Naive thymus-derived CD4-positive, alpha-beta T cell (primary cell): ENCODE measurements at regions of chr3 and their contacts with region 1.

Region 1: DNA sequence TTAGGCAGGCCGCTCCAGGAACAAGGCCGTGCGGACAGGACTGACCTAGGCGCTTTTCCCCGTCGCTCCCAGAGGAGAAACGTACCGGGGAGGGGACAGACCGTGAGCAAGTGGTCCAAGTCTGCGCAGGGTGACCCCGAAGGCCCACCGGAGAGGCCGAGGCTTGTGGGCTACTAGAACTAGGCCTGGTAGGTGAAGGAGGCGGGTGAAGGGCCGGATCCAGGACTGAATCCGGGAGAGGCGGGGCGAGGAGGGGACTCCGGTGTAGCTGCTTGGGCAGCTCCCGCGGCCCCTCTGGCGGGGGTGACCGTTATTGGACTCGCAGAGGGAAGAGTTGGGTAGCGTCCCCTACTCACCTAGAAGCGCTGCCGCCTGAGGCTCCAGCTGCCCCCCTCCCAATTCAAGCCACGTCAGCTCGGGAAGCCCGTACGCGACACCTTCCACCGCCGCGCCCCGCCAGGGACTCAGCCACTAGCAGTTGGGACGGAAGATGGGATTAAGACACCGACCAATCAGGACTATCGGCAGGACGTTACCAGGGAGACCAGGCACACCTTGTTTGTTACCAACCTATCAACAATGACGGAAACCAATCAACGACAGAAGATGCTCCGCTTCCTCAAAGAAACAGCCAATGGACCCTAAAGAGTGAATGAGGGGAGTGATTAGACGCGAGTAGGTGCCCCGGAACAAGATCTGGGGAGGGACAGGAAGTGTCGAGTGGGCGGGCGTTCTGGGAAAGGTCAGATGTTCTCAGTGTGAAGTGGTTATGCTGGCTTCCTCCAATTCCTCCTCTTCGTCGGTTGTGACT is at the start of gene GOLGB1:
- DNase-seq: peak; percentile 79 to 98 (median 96)
- ATAC-seq: peak; percentile 96
- H3K4me3 ChIP-seq: peak within 1 kb of the TSS; percentile 78
- H3K4me3 Mint-ChIP-seq: peak within 1 kb of the TSS in 3 of 10 donors; percentile 5 to 58 (median 39)
- H3K27ac ChIP-seq: peak within 1 kb of the TSS; percentile 96
- H3K27ac Mint-ChIP-seq: peak within 1 kb of the TSS in 2 of 9 donors; percentile 19 to 36
- H3K4me1 ChIP-seq: peaks cover 4 to 11% of the 10 kb centered on the region in 2 donors
- H3K4me1 Mint-ChIP-seq: peaks cover 5 to 18% (median 10%) of the 10 kb centered on the region in 7 donors
- H3K27me3 ChIP-seq: no peaks in the 10 kb centered on the region
- H3K27me3 Mint-ChIP-seq: peaks cover 0 to 24% (median 14%) of the 10 kb centered on the region in 5 donors
- total RNA-seq, gene GOLGB1: 29.5 to 49.7 (median 44.5) TPM

Region 2: DNA sequence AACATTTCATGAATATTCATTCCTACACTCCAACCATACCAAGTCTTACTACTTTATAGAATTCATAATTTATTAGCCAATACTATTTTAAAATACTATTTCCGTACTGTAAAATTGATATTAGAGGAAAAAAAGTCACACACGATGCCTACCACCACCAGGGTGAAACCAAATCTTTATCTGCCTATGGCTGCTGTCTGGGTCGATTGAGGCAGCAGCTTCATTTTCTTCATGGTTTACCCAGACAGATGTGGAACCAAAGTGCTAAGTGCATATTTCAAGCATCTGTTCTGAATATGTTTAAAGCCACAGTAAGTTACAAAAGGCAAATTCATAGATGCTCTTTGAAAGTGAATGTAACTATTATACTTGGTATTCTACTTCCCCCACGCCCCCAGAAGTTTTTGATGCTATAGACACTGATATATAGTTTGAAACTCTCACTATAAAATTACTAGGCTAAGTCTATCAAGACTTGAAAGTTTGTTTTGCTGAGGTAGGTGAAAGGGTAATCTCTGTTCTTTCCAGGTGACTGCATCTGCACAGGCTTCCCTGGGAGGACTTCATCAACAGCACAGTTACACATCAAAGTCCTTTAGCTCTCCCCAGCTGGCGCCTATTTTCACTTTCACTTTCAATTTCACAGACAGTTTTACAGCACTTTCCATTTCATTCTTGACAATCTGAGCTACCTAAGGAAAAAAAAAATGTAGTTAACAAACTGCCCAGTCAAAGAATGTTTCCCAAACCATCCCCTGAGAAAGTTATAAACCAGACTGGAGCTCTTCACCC is 317.6 kb before region 1 on chr3:
- CTCF ChIA-PET with region 1: no interaction called
- POLR2A ChIA-PET with region 1: no interaction called
- intact Hi-C with region 1: loop called (anchors 1 to 5 kb)
- DNase-seq: peak in 8 of 9 donors; percentile 36 to 80 (median 74)
- ATAC-seq: peak; percentile 89
- H3K4me3 ChIP-seq: peak overlapping the region; percentile 52
- H3K4me3 Mint-ChIP-seq: peak overlapping the region; percentile 46 to 84 (median 76)
- H3K27ac ChIP-seq: peak overlapping the region; percentile 33
- H3K27ac Mint-ChIP-seq: peak overlapping the region; percentile 48 to 92 (median 84)
- H3K4me1 ChIP-seq: peaks cover 0 to 9% of the 10 kb centered on the region in 2 donors
- H3K4me1 Mint-ChIP-seq: peaks cover 6 to 31% (median 24%) of the 10 kb centered on the region in 7 donors
- H3K27me3 ChIP-seq: no peaks in the 10 kb centered on the region
- H3K27me3 Mint-ChIP-seq: no peaks in the 10 kb centered on the region

Region 3: DNA sequence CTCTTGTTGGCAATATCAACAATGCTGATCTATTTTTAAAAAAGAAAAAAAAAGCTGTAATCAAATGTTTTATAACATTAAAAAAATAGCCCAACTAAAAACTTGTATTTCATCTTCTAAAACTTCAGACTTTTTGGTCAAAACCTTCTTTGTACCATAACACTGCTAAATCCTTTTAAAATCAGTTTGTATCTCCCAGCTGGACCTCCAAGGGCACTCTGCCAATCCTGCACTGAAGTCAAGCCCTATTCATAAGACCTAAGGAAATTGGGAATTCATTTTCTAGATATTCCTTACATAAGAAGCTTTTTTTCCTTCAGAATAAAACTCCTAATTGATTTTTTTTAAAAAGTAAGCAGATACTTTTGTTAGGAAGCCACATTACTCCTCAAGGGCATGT is 50.6 kb before region 1 on chr3:
- CTCF ChIA-PET with region 1: no interaction called
- POLR2A ChIA-PET with region 1: no interaction called
- intact Hi-C with region 1: no loop called
- DNase-seq: no peak
- ATAC-seq: no peak
- H3K4me3 ChIP-seq: no peak overlapping the region
- H3K4me3 Mint-ChIP-seq: no peak overlapping the region
- H3K27ac ChIP-seq: no peak overlapping the region
- H3K27ac Mint-ChIP-seq: no peak overlapping the region
- H3K4me1 ChIP-seq: no peaks in the 10 kb centered on the region
- H3K4me1 Mint-ChIP-seq: peaks cover 0 to 11% (median 5%) of the 10 kb centered on the region in 7 donors
- H3K27me3 ChIP-seq: no peaks in the 10 kb centered on the region
- H3K27me3 Mint-ChIP-seq: no peaks in the 10 kb centered on the region

Region 4: DNA sequence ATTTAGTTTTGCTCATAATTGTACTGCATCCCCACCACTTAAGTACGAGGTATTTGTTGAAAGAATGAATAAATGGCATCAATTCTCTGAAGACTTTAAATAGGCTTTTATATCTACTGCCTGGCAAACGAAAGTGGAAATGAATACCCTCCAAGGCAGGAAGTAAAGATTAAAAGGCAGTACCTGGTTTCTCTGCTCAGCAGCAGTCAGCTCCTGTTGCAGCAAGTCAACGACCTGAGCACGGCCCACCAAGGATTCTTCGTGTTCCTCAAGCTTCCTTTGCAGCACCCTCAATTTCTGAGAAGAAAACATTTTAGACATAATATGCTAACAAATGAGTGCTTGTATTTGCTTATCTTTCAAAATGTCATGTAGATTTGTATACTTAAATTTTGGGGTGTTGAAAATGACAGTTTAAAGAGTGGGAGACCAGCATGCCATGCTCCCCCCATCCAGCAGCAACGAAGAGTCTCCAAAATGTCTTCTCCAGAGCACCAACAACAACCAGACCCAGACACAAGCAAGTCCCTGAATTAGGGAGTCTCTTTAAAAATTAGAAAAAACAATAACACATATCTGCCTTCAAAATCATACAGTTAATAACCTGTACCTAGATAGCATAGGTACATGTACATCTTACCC is 31.2 kb before region 1 on chr3:
- CTCF ChIA-PET with region 1: interaction called, 3 read pairs
- POLR2A ChIA-PET with region 1: interaction called, 5 read pairs
- intact Hi-C with region 1: loop called in 1 of 2 experiments (anchors 1 kb)
- DNase-seq: peak in 7 of 9 donors; percentile 37 to 70 (median 58)
- ATAC-seq: peak; percentile 88
- H3K4me3 ChIP-seq: peak overlapping the region; percentile 15
- H3K4me3 Mint-ChIP-seq: peak overlapping the region; percentile 3 to 80 (median 48)
- H3K27ac ChIP-seq: peak overlapping the region; percentile 47
- H3K27ac Mint-ChIP-seq: peak overlapping the region; percentile 63 to 97 (median 90)
- H3K4me1 ChIP-seq: peaks cover 0 to 7% of the 10 kb centered on the region in 2 donors
- H3K4me1 Mint-ChIP-seq: peaks cover 13 to 37% (median 22%) of the 10 kb centered on the region in 7 donors
- H3K27me3 ChIP-seq: no peaks in the 10 kb centered on the region
- H3K27me3 Mint-ChIP-seq: no peaks in the 10 kb centered on the region

Region 5: DNA sequence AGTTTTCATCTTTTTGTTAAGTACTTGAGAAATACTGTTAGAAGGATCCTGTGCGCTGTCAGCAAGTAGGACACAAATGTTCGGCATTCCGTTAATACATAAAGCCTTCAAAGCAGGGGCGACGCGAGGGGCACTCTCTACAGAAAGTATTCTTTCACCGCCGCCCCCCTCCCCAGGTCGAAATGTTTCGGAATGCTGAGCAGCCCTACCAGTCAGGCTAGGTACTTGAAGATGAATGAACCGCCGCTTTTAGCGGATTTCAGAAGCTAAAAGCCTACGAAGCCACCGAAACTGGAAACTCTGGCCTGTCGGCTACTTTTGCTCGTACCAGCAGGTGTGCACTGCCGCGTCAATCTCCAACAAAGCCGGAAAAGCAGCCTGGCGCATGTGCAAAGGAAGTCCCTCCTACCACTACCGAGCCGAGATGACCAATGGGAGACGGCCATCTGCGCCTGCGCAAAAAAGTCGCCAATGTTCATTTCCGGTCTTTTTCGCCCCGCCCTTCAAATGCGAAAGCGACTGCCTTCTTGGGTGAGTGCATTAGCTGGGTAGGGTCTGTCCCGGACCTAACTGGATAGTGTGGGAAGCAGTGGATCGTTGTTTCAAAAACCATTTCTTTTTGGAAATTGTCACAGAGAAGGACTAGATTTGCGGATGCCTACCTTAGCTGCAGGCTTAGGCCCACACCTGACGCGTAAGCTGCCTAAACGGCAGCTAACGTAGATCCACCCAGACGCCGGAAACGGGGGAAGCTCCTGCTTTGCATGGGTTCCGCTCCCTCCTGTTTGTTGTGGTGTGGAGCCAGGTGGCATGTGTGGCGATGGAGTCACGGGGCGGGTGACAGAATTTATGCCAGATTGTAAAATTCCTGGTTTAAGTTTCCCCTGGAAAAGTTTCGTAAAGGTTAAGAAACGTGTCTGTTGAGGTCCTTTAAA is 666.5 kb after region 1 on chr3 and contains the start of gene WDR5B:
- CTCF ChIA-PET with region 1: no interaction called
- POLR2A ChIA-PET with region 1: no interaction called
- intact Hi-C with region 1: loop called (anchors 1 kb)
- DNase-seq: peak; percentile 95 to 99 (median 99)
- ATAC-seq: peak; percentile 94
- H3K4me3 ChIP-seq: peak within 1 kb of the TSS; percentile 96
- H3K4me3 Mint-ChIP-seq: peak within 1 kb of the TSS; percentile 92 to 99 (median 97)
- H3K27ac ChIP-seq: peak within 1 kb of the TSS; percentile 93
- H3K27ac Mint-ChIP-seq: peak within 1 kb of the TSS; percentile 98 to 100 (median 100)
- H3K4me1 ChIP-seq: peaks cover 19 to 24% of the 10 kb centered on the region in 2 donors
- H3K4me1 Mint-ChIP-seq: peaks cover 24 to 72% (median 65%) of the 10 kb centered on the region in 7 donors
- H3K27me3 ChIP-seq: no peaks in the 10 kb centered on the region
- H3K27me3 Mint-ChIP-seq: peaks cover 0 to 3% (median 0%) of the 10 kb centered on the region in 5 donors
- total RNA-seq, gene WDR5B: 4.8 to 19.4 (median 6.4) TPM

Region 6: DNA sequence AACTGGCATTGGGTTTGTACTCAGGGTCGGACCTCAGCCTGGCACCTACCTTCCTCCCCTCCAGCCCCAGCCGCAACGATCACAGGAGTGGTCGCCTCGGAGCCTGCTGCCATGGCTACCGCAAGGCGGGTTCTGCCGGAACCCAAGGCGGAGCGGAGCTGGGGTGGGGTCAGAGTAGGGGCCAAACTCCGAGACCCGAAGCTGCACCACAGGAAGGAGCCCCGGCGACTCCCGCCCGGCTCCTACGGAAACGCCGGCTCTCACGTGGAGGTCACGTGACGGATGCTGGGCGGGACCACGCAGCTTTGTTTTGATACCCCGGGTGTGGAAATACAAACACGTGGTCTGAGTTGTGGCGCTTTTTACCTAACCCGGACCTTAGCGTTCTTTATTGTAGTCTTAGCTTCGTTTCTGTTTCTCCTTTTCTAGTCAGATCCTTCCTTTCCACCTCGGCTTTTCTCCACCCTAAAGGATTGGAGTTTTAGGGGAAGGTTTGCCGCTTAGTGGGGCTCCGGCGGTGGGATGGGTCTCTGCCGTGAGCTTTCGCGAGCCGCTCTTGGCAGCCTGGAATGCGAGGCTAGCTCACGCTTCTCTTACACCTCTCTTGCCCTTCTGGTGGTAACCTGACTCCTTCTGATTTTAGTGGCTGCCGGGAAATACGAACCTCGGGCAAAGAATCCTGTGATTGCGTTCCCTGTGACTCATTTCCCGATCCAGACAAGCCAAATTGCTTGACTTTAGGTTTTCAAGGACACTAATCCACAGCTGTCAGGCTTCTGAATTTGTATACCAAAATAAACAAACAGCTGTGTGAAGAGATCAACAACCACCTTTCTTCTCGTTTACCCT is 1044.3 kb after region 1 on chr3 and contains the start of gene HSPBAP1:
- CTCF ChIA-PET with region 1: no interaction called
- POLR2A ChIA-PET with region 1: no interaction called
- intact Hi-C with region 1: loop called in 1 of 2 experiments (anchors 2 kb)
- DNase-seq: peak; percentile 71 to 90 (median 86)
- ATAC-seq: peak; percentile 77
- H3K4me3 ChIP-seq: peak within 1 kb of the TSS; percentile 83
- H3K4me3 Mint-ChIP-seq: peak within 1 kb of the TSS in 5 of 10 donors; percentile 91 to 97 (median 95)
- H3K27ac ChIP-seq: peak within 1 kb of the TSS; percentile 82
- H3K27ac Mint-ChIP-seq: peak within 1 kb of the TSS in 6 of 9 donors; percentile 79 to 99 (median 96)
- H3K4me1 ChIP-seq: peaks cover 22 to 34% of the 10 kb centered on the region in 2 donors
- H3K4me1 Mint-ChIP-seq: peaks cover 20 to 29% (median 27%) of the 10 kb centered on the region in 7 donors
- H3K27me3 ChIP-seq: no peaks in the 10 kb centered on the region
- H3K27me3 Mint-ChIP-seq: no peaks in the 10 kb centered on the region
- total RNA-seq, gene HSPBAP1: 9.0 to 31.5 (median 23.3) TPM